ENCODE measurements at regions of chr10 and their contacts with region 1.

Region 1: DNA sequence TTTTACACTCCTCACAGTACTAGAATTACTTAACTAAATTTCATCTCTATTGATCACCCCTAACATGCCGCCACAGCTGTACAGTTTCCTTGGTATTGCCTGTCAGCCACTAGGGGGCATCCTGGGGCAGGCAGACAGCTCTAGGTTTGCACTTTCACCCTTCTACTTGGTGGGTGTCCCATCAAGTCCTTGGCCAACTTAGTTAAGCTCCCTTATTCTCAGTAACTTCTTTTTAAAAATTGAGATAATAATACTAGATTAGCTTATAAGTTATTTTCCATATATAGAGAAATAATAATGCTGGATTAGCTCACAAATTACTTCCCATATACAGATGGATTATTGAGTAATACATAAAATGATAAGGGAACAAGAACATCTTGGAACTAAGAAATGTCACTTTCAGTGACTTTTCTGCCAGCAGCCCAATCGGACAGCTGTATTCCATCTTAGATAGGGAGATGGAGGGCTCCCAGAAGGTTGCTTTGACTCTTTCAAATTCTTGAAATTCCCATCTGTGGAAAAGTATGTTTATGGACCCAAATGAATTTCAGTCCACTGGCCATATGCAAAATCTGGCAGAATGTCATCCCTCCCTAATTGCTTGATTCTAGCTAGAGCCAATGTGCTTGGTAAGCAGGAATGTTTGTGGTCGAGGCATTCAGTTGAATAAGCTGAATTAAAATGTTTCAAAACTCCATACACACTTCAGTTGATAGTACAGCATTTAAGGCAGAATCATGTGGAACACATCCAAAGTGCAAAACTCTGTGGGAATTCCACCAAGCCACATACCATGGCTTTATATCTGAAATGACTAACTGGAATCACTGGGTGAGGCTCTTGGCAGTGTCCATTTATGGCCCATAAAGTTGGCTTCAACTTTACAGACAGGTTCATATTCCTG is 309.7 kb downstream of the CSTF2T start:
- DNase-seq: peak; percentile 66
- H3K4me3 ChIP-seq: no peak overlapping the region
- H3K27ac ChIP-seq: no peak overlapping the region
- H3K4me1 ChIP-seq: no peaks in the 10 kb centered on the region
- H3K27me3 ChIP-seq: no peaks in the 10 kb centered on the region
- CTCF ChIP-seq: peak; percentile 93

Region 2: DNA sequence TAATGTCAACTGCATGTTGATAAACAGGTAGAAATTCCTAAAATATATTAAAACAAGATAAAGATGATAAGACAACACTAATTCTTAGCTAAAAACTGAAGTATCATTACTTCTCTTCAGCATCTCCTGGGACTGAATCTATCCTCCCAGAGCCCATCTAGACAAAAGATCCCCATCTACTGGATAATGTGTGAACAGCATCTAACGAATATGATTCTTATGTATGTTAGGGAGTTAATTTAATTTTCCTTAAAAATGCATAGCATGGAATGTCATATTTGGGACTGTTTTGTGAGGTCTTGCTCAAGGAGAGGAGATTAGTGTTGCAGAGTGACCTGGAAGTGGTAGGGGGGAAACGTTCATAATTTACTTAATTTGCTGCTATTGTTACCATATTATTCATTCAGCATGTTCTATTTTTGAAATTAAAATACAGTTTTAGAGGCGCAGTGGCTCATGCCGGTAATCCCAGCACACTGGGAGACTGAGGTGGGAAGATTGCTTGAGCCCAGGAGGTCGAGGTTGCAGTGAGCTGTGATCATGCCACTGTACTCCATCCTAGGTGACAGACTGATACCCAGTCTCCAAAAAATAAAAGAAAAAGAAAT is 614.8 kb after region 1 on chr10:
- CTCF ChIA-PET with region 1: no interaction called
- POLR2A ChIA-PET with region 1: no interaction called
- intact Hi-C with region 1: loop called (anchors 5 kb)
- DNase-seq: peak; percentile 60
- H3K4me3 ChIP-seq: no peak overlapping the region
- H3K27ac ChIP-seq: no peak overlapping the region
- H3K4me1 ChIP-seq: no peaks in the 10 kb centered on the region
- H3K27me3 ChIP-seq: no peaks in the 10 kb centered on the region
- CTCF ChIP-seq: peak; percentile 66

Region 3: GRCh38 chr10:52215745-52216361 is 826.2 kb after region 1 on chr10:
- CTCF ChIA-PET with region 1: no interaction called
- POLR2A ChIA-PET with region 1: no interaction called
- intact Hi-C with region 1: loop called (anchors 1 kb)
- DNase-seq: peak; percentile 77
- H3K4me3 ChIP-seq: no peak overlapping the region
- H3K27ac ChIP-seq: no peak overlapping the region
- H3K4me1 ChIP-seq: peaks cover 18% of the 10 kb centered on the region
- H3K27me3 ChIP-seq: no peaks in the 10 kb centered on the region
- CTCF ChIP-seq: peak; percentile 81

Measured in A673 (cell line).